ENCODE measurements at regions of chr6 and their contacts with region 1.

Region 1: GRCh38 chr6:43402820-43403219 is 24.5 kb upstream of the ABCC10 start:
- DNase-seq: no peak
- H3K4me3 ChIP-seq: no peak overlapping the region
- H3K4me3 Mint-ChIP-seq: no peak overlapping the region
- H3K27ac ChIP-seq: no peak overlapping the region
- H3K27ac Mint-ChIP-seq: no peak overlapping the region
- H3K4me1 ChIP-seq: no peaks in the 10 kb centered on the region
- H3K4me1 Mint-ChIP-seq: no peaks in the 10 kb centered on the region
- H3K27me3 ChIP-seq: peaks cover 4 to 10% of the 10 kb centered on the region in 2 donors
- H3K27me3 Mint-ChIP-seq: peaks cover 18 to 26% (median 18%) of the 10 kb centered on the region in 3 donors
- CTCF ChIP-seq: peak; percentile 11

Region 2: GRCh38 chr6:43269273-43270007 is 133.4 kb before region 1 on chr6:
- intact Hi-C with region 1: loop called (anchors 5 to 10 kb)
- DNase-seq: no peak
- H3K4me3 ChIP-seq: peak overlapping the region; percentile 38 to 71 (median 44)
- H3K4me3 Mint-ChIP-seq: peak overlapping the region; percentile 74 to 87
- H3K27ac ChIP-seq: no peak overlapping the region
- H3K27ac Mint-ChIP-seq: no peak overlapping the region
- H3K4me1 ChIP-seq: peaks cover 7 to 11% of the 10 kb centered on the region in 2 donors
- H3K4me1 Mint-ChIP-seq: peaks cover 21% of the 10 kb centered on the region
- H3K27me3 ChIP-seq: peaks cover 8 to 69% of the 10 kb centered on the region in 2 donors
- H3K27me3 Mint-ChIP-seq: peaks cover 52 to 73% (median 67%) of the 10 kb centered on the region in 3 donors
- CTCF ChIP-seq: no peak

Region 3: GRCh38 chr6:43308101-43308989 is 94.5 kb before region 1 on chr6 and contains the start of gene CRIP3:
- intact Hi-C with region 1: no loop called
- DNase-seq: peak; percentile 25 to 48 (median 39)
- H3K4me3 ChIP-seq: peak within 1 kb of the TSS; percentile 24 to 73 (median 37)
- H3K4me3 Mint-ChIP-seq: peak within 1 kb of the TSS; percentile 80 to 88
- H3K27ac ChIP-seq: no peak within 1 kb of the TSS
- H3K27ac Mint-ChIP-seq: peak within 1 kb of the TSS in 4 of 7 donors; percentile 66 to 78 (median 70)
- H3K4me1 ChIP-seq: peaks cover 52 to 58% of the 10 kb centered on the region in 2 donors
- H3K4me1 Mint-ChIP-seq: peaks cover 54% of the 10 kb centered on the region
- H3K27me3 ChIP-seq: no peaks in the 10 kb centered on the region
- H3K27me3 Mint-ChIP-seq: peaks cover 0 to 2% (median 0%) of the 10 kb centered on the region in 3 donors
- CTCF ChIP-seq: peak; percentile 64
- polyA plus RNA-seq, gene CRIP3: 1.2 to 12.8 (median 1.6) TPM

Measured in CD14-positive monocyte (primary cell).